HCT116 (cell line): ENCODE measurements at regions of chr12 and their contacts with region 1.

Region 1: GRCh38 chr12:46372544-46373110 is at the start of gene SLC38A2:
- DNase-seq: peak; percentile 71
- ATAC-seq: peak; percentile 83
- H3K4me3 ChIP-seq: peak within 1 kb of the TSS; percentile 80 to 84
- H3K27ac ChIP-seq: peak within 1 kb of the TSS; percentile 95
- H3K4me1 ChIP-seq: peaks cover 45 to 72% of the 10 kb centered on the region in 2 experiments
- H3K27me3 ChIP-seq: no peaks in the 10 kb centered on the region
- CTCF ChIP-seq: no peak
- POLR2A ChIP-seq: peak; percentile 99
- RAD21 ChIP-seq: peak; percentile 37
- total RNA-seq, gene SLC38A2: 1,049 TPM

Region 2: DNA sequence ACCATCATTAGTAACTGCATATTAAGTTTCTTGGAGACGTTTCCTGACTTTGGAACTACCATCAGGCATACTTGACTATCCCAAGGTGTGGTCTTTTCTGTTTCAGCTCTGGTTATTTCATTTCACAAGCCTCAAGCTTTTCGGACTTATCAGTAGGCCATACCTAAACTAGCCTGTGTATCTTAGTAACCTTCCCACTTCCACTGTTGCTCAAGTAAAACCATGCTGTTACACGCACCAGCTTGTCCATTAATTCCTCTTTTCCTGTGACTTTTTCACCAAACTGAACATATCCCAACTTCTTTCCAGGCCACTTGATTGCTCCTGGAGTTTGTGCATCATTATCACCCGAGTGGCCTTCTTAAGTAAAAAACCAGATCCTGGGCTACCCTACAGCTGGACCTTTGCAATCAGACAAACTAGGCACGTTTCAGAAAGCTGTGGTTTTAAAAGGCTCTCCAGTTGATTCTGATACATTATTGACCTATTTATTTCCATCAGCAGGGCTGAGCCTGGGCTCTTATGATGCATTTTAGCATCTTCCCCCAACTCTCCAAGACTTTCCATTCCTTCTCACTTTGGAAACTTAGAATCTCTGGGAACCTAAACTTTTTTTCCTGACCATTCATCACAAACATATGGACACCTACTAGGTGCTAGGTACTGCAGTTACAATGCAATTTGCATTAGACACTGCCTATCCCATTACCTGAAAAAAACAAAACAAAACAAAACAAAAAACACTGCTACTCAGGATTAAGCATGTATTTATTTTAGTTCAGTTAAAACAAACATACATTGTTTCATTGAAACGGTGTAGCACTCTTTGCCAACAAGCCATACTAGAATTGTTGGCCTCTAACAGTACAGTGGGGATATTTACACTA is 14.9 kb before region 1 on chr12:
- CTCF ChIA-PET with region 1: no interaction called
- POLR2A ChIA-PET with region 1: interaction called, 82 read pairs
- RAD21 ChIA-PET with region 1: interaction called in 1 of 2 experiments, 3 read pairs
- intact Hi-C with region 1: no loop called
- DNase-seq: peak; percentile 84
- ATAC-seq: peak; percentile 65
- H3K4me3 ChIP-seq: no peak overlapping the region
- H3K27ac ChIP-seq: peak overlapping the region; percentile 24
- H3K4me1 ChIP-seq: peaks cover 0 to 19% of the 10 kb centered on the region in 2 experiments; a peak in 2 of 4 replicates
- H3K27me3 ChIP-seq: no peaks in the 10 kb centered on the region
- CTCF ChIP-seq: no peak
- POLR2A ChIP-seq: no peak
- RAD21 ChIP-seq: peak; percentile 22

Region 3: DNA sequence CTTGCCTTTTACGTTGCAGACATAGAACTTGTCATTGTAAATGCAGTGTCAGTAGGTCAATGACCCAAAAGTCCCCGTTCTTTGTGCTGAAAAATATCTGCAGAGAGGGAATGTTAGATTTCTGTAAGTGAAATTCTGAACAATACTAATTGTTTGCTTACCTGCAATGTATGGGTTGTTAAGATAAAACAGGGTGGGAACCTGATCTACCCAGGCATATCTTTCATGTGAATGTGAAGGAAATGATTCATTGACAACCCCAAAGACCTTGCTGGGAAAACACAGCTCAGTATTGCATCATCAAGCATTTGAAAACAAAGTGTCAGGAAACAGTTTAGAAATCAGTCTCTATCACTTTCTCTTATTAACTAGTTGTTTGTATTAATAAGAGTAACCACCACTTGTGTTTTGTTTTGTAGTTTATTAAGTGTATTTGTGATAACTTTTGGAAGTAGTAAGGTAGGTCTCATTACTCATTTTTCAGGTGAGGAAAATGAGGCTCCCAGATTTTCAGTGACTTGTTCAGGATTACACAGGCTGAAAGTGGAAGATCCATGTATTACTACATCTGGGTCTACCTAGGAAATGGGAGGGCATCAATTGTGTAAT is 57.8 kb after region 1 on chr12:
- CTCF ChIA-PET with region 1: no interaction called
- POLR2A ChIA-PET with region 1: interaction called, 7 read pairs
- RAD21 ChIA-PET with region 1: no interaction called
- intact Hi-C with region 1: loop called (anchors 1 kb)
- DNase-seq: peak; percentile 92
- ATAC-seq: peak; percentile 65
- H3K4me3 ChIP-seq: peak overlapping the region in 1 of 2 experiments; percentile 38; a peak in 2 of 4 replicates
- H3K27ac ChIP-seq: peak overlapping the region; percentile 76
- H3K4me1 ChIP-seq: peaks cover 67 to 71% of the 10 kb centered on the region in 2 experiments
- H3K27me3 ChIP-seq: no peaks in the 10 kb centered on the region
- CTCF ChIP-seq: no peak
- POLR2A ChIP-seq: no peak
- RAD21 ChIP-seq: peak; percentile 41

Region 4: GRCh38 chr12:46468159-46468558 is 95.5 kb after region 1 on chr12:
- CTCF ChIA-PET with region 1: no interaction called
- POLR2A ChIA-PET with region 1: interaction called, 5 read pairs
- RAD21 ChIA-PET with region 1: no interaction called
- intact Hi-C with region 1: loop called (anchors 2 kb)
- DNase-seq: peak; percentile 83
- ATAC-seq: peak; percentile 72
- H3K4me3 ChIP-seq: peak overlapping the region in 1 of 2 experiments; percentile 29; a peak in 2 of 4 replicates
- H3K27ac ChIP-seq: peak overlapping the region; percentile 100
- H3K4me1 ChIP-seq: peaks cover 61 to 73% of the 10 kb centered on the region in 2 experiments
- H3K27me3 ChIP-seq: no peaks in the 10 kb centered on the region
- CTCF ChIP-seq: 0 out of 6 replicates have a peak, but pooled peaks of 2 of the 3 experiments have one; percentile 10 to 18
- POLR2A ChIP-seq: no peak
- RAD21 ChIP-seq: peak; percentile 33

Region 5: DNA sequence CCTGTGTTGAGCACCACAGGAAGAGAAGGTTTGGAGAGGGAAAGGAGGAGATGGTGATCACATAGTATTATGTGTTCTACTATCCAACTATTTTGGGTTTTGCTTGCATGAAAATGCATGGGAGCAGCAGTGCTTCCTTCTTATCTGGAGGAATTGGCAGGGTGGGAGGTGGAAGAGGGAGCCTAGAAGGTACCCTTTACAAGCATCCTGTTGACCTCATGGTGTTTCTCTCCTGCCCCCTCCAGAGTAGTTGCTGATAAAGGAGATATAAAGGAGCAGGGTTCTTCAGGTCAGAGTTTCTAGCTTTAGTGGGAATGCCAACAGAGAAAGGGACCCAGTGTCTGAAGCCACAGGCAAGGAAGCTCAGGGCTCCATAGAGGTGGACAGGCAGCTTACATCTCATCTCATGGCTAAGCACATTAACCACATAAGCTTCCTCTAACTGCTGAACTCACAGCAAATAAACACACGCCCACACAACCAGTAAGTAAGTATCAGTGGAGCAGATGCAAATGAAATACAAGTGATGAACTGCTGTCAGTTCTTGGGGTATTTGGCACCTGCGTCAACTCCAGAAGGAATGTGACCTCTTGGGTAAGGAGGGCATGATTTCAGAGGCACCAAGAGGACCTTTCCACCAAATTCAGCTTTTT is 174.1 kb after region 1 on chr12:
- CTCF ChIA-PET with region 1: no interaction called
- POLR2A ChIA-PET with region 1: interaction called, 9 read pairs
- RAD21 ChIA-PET with region 1: no interaction called
- intact Hi-C with region 1: loop called (anchors 1 kb)
- DNase-seq: no peak
- ATAC-seq: no peak
- H3K4me3 ChIP-seq: no peak overlapping the region
- H3K27ac ChIP-seq: peak overlapping the region; percentile 91
- H3K4me1 ChIP-seq: peaks cover 55 to 58% of the 10 kb centered on the region in 2 experiments
- H3K27me3 ChIP-seq: no peaks in the 10 kb centered on the region
- CTCF ChIP-seq: no peak
- POLR2A ChIP-seq: no peak
- RAD21 ChIP-seq: no peak

Region 6: DNA sequence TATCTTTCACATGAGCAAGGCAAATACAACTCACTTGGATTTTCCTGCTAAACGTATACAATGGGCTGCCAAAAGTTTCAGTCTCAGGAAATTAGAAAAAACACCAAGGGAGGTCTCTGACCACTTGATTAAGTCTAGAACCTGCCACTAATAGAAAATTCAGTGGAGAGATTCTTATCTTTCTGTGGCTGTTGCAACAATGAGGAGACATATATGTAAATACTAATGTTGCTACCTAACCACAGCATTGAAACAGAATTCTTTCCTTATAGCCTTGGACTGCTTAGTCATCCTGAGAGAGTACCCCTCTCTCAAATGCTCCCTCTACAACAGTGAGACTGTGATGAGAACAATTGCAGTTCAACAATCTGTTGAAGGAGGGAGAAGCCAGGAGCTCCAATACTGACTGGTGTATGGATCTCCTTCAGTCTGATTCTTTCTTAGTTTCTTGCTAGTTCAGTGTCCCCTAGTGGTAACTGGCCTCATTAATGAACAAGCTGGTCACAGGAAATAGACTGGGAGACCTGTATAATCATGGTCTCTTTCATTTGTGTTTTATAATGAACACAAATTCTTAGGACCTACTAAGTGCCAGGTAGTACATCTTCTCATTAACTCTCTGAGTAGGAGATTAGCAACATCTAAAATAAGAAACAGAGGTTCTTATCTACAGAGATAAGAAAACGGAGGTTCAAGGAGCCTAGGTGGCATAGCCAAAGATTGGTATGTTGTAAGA is 288.7 kb after region 1 on chr12:
- CTCF ChIA-PET with region 1: no interaction called
- POLR2A ChIA-PET with region 1: interaction called, 3 read pairs
- RAD21 ChIA-PET with region 1: no interaction called
- intact Hi-C with region 1: loop called (anchors 5 kb)
- DNase-seq: peak; percentile 71
- ATAC-seq: peak; percentile 78
- H3K4me3 ChIP-seq: no peak overlapping the region
- H3K27ac ChIP-seq: peak overlapping the region; percentile 21; the same call in 1 of the 2 replicates
- H3K4me1 ChIP-seq: peaks cover 53 to 65% of the 10 kb centered on the region in 2 experiments
- H3K27me3 ChIP-seq: no peaks in the 10 kb centered on the region
- CTCF ChIP-seq: peak; percentile 69 to 87 (median 73); a peak in 5 of 6 replicates
- POLR2A ChIP-seq: no peak
- RAD21 ChIP-seq: peak; percentile 93